A549 (cell line): ENCODE measurements at regions of chr5 and their contacts with region 1.

Region 1: DNA sequence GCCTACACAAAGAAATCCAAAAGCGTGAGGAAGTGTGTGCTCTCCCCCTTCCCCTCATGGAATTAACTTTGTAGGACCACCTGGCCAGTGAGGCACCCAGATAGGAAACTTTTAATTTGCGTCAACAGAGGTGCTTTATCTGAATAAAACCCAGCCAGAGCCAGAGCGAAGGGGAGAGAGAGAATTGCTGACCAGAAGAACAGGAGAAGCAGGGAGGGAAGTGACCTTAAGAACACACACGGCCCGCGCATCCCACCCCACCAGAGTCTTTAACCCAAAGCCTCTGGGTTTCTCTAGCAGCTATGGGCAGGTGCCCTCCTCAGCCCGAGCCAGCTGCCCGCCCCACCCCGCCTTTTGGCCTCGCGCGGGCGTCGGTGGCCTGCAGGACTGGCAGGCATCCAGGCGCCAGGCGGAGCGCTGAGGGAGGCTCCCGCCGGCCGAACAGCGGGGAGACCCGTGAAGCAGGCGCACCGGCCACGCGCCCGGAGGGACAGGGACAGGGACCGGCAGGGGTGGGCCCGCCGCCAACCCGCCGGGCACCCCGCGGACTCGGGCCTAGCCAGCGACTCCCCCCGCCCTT is 580 bp downstream of the ERAP1 start:
- DNase-seq: peak; percentile 70 to 75
- ATAC-seq: peak; percentile 76 to 77
- H3K4me3 ChIP-seq: peak overlapping the region; percentile 81
- H3K27ac ChIP-seq: peak overlapping the region; percentile 99
- H3K4me1 ChIP-seq: peaks cover 5% of the 10 kb centered on the region
- CTCF ChIP-seq: no peak
- EP300 ChIP-seq: no peak
- POLR2A ChIP-seq: peak; percentile 68
- RAD21 ChIP-seq: no peak

Region 2: DNA sequence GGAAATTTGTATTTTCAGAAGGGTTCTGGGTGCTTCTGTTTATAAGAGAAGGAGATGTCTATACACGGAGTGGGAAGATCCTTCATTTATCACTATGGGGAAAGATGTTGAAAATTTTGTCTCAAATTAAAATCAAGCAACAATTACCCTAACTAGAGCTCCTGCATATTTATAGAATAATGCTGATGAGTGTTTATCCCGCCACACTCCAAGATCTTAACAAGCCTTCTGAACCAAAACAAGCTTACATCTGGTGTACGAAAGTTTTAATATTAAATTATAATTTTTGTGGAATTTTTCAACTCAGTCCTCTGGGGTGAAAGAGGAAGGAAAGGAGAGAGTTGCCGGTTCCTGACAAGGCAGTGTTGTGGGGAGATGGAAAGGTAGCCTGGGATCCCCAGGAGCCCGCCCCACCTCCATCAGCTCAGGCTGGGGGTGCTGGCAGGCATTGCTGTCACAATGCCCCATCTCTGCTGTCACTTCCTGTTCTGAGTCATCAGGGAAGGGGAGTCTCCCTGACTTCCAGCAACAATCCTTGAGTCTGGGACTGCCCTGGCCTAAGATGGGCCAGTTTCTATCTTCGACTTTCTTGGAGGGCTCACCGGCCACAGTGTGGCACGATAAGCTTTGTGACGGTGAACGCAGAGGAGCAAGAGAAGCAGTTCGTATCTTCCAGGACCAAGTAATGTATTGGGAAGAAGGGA is 63.9 kb before region 1 on chr5:
- CTCF ChIA-PET with region 1: no interaction called
- POLR2A ChIA-PET with region 1: no interaction called
- DNase-seq: no peak
- ATAC-seq: peak; percentile 34 to 50; a peak in 5 of 6 replicates
- H3K4me3 ChIP-seq: no peak overlapping the region
- H3K27ac ChIP-seq: peak overlapping the region in 1 of 2 experiments; percentile 26; a peak in 1 of 6 replicates
- H3K4me1 ChIP-seq: peaks cover 7% of the 10 kb centered on the region
- CTCF ChIP-seq: no peak
- EP300 ChIP-seq: no peak
- POLR2A ChIP-seq: no peak
- RAD21 ChIP-seq: no peak

Region 3: DNA sequence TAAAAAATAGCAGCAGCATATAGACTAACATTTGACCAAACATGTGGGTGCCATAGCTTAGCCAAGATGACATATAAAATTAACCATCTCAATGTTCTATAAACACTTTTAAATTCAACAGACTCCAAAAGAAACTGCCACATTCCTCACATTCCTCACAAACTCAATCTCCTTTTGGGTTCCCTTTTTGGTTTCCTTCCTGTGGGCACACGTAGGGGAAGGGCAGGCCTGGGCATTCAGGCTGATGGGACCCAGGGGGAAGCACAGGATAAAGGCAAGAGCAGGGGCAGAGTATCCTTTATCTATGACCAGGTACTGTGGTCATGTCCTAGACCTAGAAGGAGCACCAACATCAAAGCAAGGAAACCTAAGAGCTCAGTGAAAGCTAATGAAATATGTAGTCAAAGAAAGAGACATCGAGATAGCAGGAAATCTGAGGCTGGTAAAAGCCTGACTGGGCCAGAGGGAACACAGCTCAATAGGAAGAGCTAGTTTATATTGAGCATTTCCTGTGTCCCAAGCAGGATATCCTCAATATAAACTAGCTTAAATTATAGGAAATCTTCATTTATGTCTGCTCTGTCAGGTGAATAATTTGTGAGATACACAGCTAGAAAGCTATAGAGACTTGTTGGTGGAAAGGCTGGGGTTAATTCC is 14.2 kb after region 1 on chr5:
- CTCF ChIA-PET with region 1: interaction called, 8 read pairs
- POLR2A ChIA-PET with region 1: interaction called, 10 read pairs
- DNase-seq: no peak
- ATAC-seq: no peak
- H3K4me3 ChIP-seq: no peak overlapping the region
- H3K27ac ChIP-seq: no peak overlapping the region
- H3K4me1 ChIP-seq: peaks cover 8% of the 10 kb centered on the region
- CTCF ChIP-seq: no peak
- EP300 ChIP-seq: no peak
- POLR2A ChIP-seq: no peak
- RAD21 ChIP-seq: no peak

Region 4: GRCh38 chr5:96935559-96936430 is 128.6 kb after region 1 on chr5 and contains the start of gene LNPEP:
- CTCF ChIA-PET with region 1: no interaction called
- POLR2A ChIA-PET with region 1: interaction called, 10 read pairs
- DNase-seq: peak; percentile 73 to 98
- ATAC-seq: peak; percentile 76 to 88
- H3K4me3 ChIP-seq: peak within 1 kb of the TSS; percentile 94
- H3K27ac ChIP-seq: peak within 1 kb of the TSS; percentile 97
- H3K4me1 ChIP-seq: peaks cover 25% of the 10 kb centered on the region
- CTCF ChIP-seq: no peak
- EP300 ChIP-seq: no peak
- POLR2A ChIP-seq: peak; percentile 61
- RAD21 ChIP-seq: no peak
- polyA plus RNA-seq, gene LNPEP: 19.1 and 19.7 TPM in 2 replicates